ENCODE measurements at regions of chr11 and their contacts with region 1.

Region 1: DNA sequence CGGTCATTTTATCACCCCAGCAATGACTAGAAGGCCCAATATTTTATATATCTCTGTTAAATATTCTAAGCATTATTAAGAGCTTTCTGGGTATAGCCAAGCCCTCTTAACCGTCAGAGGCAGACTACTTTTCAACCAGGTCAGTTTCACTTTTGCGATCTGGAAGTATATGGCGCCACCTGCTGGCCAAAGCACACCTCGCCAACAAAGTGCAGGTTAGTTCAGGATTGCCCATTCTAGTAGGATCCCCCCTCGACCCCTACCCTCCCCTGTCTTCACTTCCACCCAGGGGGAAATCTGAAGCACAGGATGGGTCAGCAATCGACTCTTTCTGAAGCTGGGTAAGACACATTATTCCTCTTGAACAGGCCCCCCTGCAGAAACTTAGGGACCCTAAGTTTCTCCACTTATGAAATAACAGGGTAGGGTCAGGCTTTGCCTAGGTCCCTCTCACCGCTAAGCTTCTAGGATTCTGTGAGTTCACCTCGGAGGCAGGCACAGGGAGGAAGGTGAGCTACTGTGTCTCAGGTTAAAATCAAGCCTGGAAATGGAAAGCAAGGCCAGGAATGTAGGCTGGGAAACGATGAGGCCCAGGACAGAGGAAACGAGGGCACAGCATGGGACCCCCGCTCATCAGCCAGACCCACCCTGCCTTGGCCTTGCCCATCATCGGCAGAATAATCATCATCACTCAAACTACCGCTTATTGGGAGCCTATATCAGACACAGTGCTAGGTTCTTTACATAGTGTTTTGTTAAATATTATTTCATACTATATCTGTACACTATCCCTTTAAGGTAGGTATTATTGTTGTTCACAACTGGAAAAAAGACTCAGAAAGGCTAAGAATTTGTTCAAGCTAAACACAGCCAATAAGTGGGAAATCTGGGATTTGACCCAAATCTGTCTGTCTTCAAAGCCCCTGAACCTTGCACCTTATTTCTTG is 35.6 kb downstream of the KCNJ1 start:
- DNase-seq: peak; percentile 91
- H3K4me3 ChIP-seq: peak overlapping the region; percentile 37
- H3K27ac ChIP-seq: peak overlapping the region; percentile 71
- H3K4me1 ChIP-seq: peaks cover 60% of the 10 kb centered on the region
- CTCF ChIP-seq: peak; percentile 99

Region 2: DNA sequence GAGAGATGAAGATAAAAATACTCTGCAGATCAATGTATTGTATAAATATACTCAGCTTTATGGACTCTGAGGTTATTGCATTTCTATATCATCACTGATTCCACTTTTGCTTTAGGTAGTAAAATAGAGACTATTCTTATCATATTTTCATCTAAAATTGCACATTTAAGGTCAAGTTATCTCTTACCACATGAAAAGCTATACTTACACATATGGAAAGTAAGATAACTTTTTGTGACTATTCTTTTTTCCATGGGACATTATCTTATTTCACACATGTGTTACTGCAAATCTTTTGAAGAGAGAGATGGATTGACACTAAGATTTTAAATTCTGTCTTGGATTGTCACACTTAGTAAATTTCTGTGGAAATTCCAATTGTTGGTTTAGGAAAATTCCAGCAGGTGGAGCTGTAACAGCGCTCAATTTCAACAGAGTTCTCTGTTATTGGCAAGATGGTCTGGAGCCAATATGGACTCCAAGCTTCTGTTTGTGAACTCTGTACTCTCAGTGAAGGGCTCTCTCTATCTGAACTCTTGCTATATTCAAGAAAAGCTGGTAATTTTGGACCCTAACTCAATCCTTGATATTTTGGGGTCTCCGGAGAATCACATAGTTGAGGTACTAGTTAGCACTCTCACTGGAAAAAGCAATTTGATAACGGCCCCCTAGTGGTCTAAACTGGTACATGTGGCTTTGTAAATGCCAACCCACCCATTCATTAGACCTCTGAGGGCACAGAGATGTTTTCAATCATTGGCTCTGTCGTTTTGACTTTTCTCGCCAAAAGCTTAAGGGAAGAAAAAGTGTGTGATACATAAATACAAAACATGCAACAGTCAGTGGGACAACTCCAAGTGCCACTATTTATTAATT is 673.8 kb before region 1 on chr11:
- CTCF ChIA-PET with region 1: interaction called, 5 read pairs
- POLR2A ChIA-PET with region 1: no interaction called
- intact Hi-C with region 1: loop called (anchors 5 kb)
- DNase-seq: peak; percentile 80
- H3K4me3 ChIP-seq: no peak overlapping the region
- H3K27ac ChIP-seq: no peak overlapping the region
- H3K4me1 ChIP-seq: no peaks in the 10 kb centered on the region
- CTCF ChIP-seq: peak; percentile 100

Region 3: DNA sequence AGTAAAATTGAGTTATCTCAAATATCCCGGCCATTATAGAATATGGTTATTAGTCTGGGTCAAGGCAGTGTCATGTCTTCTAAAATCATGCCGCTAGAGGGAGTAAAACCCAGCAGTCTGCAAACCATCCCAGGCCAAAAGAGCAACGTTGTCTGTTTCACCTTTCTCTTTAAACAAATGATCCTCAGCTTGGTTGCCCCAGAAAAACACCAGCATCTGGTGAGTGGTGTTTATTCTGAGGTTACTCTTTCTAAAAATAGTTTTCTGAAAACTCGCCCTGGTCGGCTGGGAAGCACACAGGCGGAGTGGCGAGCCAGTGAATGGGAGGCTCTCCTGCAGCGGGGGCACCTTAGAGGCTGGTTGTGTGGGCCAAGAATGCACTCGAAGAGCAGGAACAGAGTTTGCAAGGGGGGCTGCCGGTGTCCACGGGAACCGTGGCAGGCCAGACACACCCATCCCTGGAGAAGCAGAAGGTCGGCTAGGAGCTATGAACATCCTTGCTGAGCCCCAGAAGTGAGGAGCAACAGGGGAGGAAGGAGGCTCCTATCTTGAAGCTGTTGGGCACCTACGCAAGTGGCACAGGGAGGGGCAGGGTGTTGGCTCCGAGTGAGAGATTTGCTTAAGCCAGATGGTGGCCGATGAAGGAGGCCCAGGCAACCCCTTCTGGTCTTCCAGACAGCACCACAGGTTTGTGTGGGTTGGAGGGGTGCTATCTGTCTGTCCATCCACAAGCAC is 541.2 kb before region 1 on chr11:
- CTCF ChIA-PET with region 1: no interaction called
- POLR2A ChIA-PET with region 1: no interaction called
- intact Hi-C with region 1: loop called (anchors 1 kb)
- DNase-seq: peak; percentile 92
- H3K4me3 ChIP-seq: peak overlapping the region; percentile 43
- H3K27ac ChIP-seq: peak overlapping the region; percentile 63
- H3K4me1 ChIP-seq: peaks cover 35% of the 10 kb centered on the region
- CTCF ChIP-seq: peak; percentile 99

Region 4: GRCh38 chr11:128695539-128696221 is 135.8 kb before region 1 on chr11:
- CTCF ChIA-PET with region 1: no interaction called
- POLR2A ChIA-PET with region 1: interaction called, 3 read pairs
- intact Hi-C with region 1: loop called (anchors 5 kb)
- DNase-seq: peak; percentile 78
- H3K4me3 ChIP-seq: peak overlapping the region; percentile 79
- H3K27ac ChIP-seq: peak overlapping the region; percentile 66
- H3K4me1 ChIP-seq: peaks cover 50% of the 10 kb centered on the region
- CTCF ChIP-seq: no peak

Region 5: GRCh38 chr11:128859563-128860441 is 28.4 kb after region 1 on chr11:
- CTCF ChIA-PET with region 1: interaction called, 4 read pairs
- POLR2A ChIA-PET with region 1: no interaction called
- intact Hi-C with region 1: loop called (anchors 1 kb)
- DNase-seq: peak; percentile 78
- H3K4me3 ChIP-seq: no peak overlapping the region
- H3K27ac ChIP-seq: no peak overlapping the region
- H3K4me1 ChIP-seq: peaks cover 8% of the 10 kb centered on the region
- CTCF ChIP-seq: peak; percentile 98

Region 6: GRCh38 chr11:128970598-128971190 is 139.2 kb after region 1 on chr11:
- CTCF ChIA-PET with region 1: no interaction called
- POLR2A ChIA-PET with region 1: no interaction called
- intact Hi-C with region 1: no loop called
- DNase-seq: no peak
- H3K4me3 ChIP-seq: no peak overlapping the region
- H3K27ac ChIP-seq: no peak overlapping the region
- H3K4me1 ChIP-seq: no peaks in the 10 kb centered on the region
- CTCF ChIP-seq: no peak

Measured in OCI-LY7 (cell line).